Naive thymus-derived CD8-positive, alpha-beta T cell (primary cell): ENCODE measurements at regions of chr16 and their contacts with region 1.

Region 1: DNA sequence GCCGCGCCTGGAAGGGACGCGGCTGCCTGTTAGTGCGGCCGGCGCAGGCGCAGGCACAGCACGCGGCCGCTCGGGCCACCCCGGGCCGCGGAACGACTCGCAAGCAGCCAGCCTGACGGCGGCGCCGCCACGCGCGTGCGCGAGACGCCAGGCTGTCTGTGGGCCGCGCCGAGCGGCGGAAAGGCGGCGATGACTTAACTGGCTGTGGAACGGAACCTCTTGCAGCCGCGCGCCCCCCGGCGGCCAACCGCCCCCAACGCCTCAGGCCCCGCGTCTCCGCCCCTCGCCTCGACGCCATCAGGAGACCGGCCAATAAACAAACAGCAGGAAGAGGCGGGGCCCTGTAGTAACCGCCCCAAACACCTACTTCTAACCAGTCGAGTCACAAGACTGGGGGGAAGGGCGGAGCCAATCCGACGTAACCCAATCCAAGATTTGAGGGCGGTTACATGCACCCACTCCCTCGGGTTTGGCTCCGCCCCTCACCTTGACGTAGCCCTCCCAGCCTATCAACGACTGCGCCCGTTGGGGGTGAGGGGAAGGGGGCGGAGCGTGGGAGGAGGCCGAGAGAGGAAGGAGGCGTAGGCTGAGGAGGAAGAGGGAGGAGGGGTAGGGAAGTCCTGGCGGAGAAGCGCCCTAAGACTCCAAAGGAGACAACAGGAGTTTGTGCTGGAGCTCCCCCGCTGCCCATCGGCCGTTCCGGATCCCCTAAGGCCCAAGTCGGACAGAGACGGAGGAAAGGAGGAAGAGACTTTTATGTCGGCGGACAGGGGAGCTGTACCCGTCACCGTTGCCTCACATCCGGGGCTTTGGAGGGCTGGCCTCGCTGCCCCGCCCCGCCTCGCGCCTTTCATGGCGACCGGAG is at the start of gene FBRS:
- DNase-seq: peak in 9 of 10 donors; percentile 99 to 100 (median 100)
- ATAC-seq: peak; percentile 66 to 72
- H3K4me3 Mint-ChIP-seq: peak within 1 kb of the TSS; percentile 90 to 99 (median 94)
- H3K27ac Mint-ChIP-seq: peak within 1 kb of the TSS; percentile 99 to 100 (median 100)
- H3K4me1 Mint-ChIP-seq: peaks cover 20 to 46% (median 42%) of the 10 kb centered on the region in 4 donors
- H3K27me3 Mint-ChIP-seq: no peaks in the 10 kb centered on the region
- polyA plus RNA-seq, gene FBRS: 3.2 to 8.0 (median 4.4) TPM

Region 2: GRCh38 chr16:30065143-30065850 is 592.8 kb before region 1 on chr16 and contains the start of gene ALDOA:
- POLR2A ChIA-PET with region 1: interaction called, 14 read pairs
- DNase-seq: peak; percentile 89 to 96 (median 92)
- ATAC-seq: peak; percentile 81 to 87
- H3K4me3 Mint-ChIP-seq: peak within 1 kb of the TSS; percentile 98 to 100 (median 99)
- H3K27ac Mint-ChIP-seq: peak within 1 kb of the TSS; percentile 94 to 99 (median 97)
- H3K4me1 Mint-ChIP-seq: peaks cover 17 to 46% (median 43%) of the 10 kb centered on the region in 4 donors
- H3K27me3 Mint-ChIP-seq: no peaks in the 10 kb centered on the region
- polyA plus RNA-seq, gene ALDOA: 798 to 1,176 (median 994) TPM

Region 3: DNA sequence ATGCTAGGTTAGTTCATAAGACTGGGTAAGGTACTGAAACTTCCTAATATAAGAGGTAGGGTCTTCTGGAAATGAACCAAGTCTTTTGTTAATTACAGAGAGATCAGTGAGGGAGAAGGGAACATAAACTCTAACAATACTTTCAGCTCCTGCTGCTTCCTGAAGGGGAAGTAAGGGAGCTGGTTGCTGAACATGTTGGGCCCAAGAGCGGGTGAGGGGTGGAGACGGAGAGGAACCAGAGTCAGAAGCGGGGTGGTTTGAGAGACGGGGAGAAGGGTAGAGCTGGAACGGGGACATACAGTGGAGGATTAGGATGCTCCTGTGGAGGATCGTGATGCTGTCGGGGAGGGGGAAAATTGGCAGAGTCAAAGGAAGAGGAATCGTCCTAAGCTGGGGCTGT is 112.0 kb before region 1 on chr16:
- POLR2A ChIA-PET with region 1: no interaction called
- DNase-seq: no peak
- ATAC-seq: no peak
- H3K4me3 Mint-ChIP-seq: no peak overlapping the region
- H3K27ac Mint-ChIP-seq: peak overlapping the region in 5 of 10 donors; percentile 9 to 87 (median 79)
- H3K4me1 Mint-ChIP-seq: peaks cover 15 to 23% (median 16%) of the 10 kb centered on the region in 4 donors
- H3K27me3 Mint-ChIP-seq: no peaks in the 10 kb centered on the region

Region 4: DNA sequence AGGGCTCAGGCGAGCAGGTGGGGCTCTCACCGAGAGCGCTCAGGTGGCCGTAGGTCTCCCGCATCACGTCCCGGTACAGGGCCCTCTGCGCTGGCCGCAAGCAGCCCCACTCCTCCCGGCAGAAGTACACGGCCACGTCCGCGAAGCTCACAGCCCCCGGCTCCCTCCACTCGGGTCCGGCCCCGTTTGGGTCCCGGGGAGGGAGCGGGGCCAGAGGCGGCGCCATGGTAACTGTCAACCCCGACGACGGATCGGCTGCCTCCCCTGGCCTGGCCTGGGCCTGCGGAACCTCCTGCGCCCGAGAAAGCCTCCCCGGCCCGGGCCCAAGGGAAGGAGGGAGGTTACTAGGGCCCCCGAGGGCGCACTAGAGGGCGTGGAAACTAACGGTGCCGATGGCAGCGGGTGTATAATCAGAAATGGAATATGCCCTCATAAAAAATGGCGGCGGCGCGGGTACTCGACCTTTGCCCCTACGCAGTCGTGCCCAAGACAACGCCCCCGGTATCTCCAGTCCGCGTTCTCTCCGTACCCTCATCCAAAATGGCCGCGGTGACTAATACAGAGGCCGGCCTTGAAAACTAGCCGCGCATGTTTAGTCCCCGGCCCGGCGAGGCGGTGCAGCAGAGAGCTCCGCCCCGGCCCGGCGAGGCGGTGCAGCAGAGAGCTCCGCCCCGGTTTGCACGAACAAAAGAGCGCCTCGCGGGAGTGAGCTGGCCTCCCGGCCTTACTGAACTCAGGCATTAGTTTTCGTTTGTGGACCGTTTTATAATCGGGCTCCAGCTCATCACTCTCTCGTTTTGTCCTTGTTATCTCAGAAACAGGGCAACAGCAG is 99.9 kb before region 1 on chr16 and contains the start of gene ZNF764:
- POLR2A ChIA-PET with region 1: interaction called, 15 read pairs
- DNase-seq: peak; percentile 81 to 98 (median 93)
- ATAC-seq: peak; percentile 90
- H3K4me3 Mint-ChIP-seq: peak within 1 kb of the TSS; percentile 82 to 93 (median 86)
- H3K27ac Mint-ChIP-seq: peak within 1 kb of the TSS; percentile 85 to 97 (median 94)
- H3K4me1 Mint-ChIP-seq: peaks cover 13 to 53% (median 48%) of the 10 kb centered on the region in 4 donors
- H3K27me3 Mint-ChIP-seq: no peaks in the 10 kb centered on the region
- polyA plus RNA-seq, gene ZNF764: 3.6 to 6.5 (median 4.0) TPM

Region 5: GRCh38 chr16:30609926-30610839 is 47.9 kb before region 1 on chr16 and contains the start of gene ZNF689:
- POLR2A ChIA-PET with region 1: interaction called, 13 read pairs
- DNase-seq: peak; percentile 77 to 99 (median 94)
- ATAC-seq: peak; percentile 92 to 93
- H3K4me3 Mint-ChIP-seq: peak within 1 kb of the TSS; percentile 87 to 97 (median 94)
- H3K27ac Mint-ChIP-seq: peak within 1 kb of the TSS; percentile 94 to 99 (median 97)
- H3K4me1 Mint-ChIP-seq: peaks cover 5 to 30% (median 27%) of the 10 kb centered on the region in 4 donors
- H3K27me3 Mint-ChIP-seq: peaks cover 0 to 1% (median 0%) of the 10 kb centered on the region in 5 donors
- polyA plus RNA-seq, gene ZNF689: 7.7 to 12.5 (median 11.0) TPM

Region 6: GRCh38 chr16:30621765-30622164 is 36.3 kb before region 1 on chr16:
- POLR2A ChIA-PET with region 1: no interaction called
- DNase-seq: no peak
- ATAC-seq: no peak
- H3K4me3 Mint-ChIP-seq: no peak overlapping the region
- H3K27ac Mint-ChIP-seq: no peak overlapping the region
- H3K4me1 Mint-ChIP-seq: peaks cover 0 to 1% (median 0%) of the 10 kb centered on the region in 4 donors
- H3K27me3 Mint-ChIP-seq: peaks cover 0 to 1% (median 0%) of the 10 kb centered on the region in 5 donors

Region 7: GRCh38 chr16:30633526-30633917 is 24.6 kb before region 1 on chr16:
- POLR2A ChIA-PET with region 1: interaction called, 21 read pairs
- DNase-seq: no peak
- ATAC-seq: no peak
- H3K4me3 Mint-ChIP-seq: peak overlapping the region; percentile 85 to 99 (median 94)
- H3K27ac Mint-ChIP-seq: peak overlapping the region; percentile 93 to 99 (median 98)
- H3K4me1 Mint-ChIP-seq: peaks cover 14 to 25% (median 22%) of the 10 kb centered on the region in 4 donors
- H3K27me3 Mint-ChIP-seq: no peaks in the 10 kb centered on the region

Region 8: DNA sequence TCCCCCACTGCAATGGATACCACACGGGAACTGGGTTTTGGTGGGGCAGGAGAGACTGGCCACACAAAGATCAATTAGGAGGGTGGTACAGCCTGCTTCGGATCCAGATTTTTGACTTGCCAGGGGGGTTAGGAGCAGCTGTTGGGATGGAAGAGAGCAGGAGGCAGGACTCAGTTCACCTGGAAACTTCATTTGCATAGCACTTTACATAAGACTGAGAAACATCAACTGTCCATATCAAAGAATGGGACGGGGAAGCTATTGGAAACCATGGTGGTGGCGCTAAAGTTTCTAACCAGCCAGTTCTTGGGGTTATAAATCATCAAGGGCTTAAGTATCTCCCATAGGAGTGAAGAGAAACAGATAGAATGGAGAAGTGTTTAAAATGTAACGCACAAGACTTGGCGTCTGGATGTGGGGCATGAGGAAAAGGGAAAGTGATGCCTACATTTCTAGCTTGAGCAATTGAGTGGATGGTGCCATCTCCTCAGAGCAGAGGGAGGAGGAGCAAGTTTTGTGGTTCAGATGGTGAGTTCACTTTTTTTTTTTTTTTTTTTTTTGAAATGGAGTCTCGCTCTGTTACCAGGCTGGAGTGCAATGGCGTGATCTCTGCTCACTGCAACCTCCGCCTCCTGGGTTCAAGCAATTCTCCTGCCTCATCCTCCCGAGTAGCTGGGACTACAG is 34.4 kb after region 1 on chr16:
- POLR2A ChIA-PET with region 1: interaction called, 101 read pairs
- DNase-seq: no peak
- ATAC-seq: no peak
- H3K4me3 Mint-ChIP-seq: no peak overlapping the region
- H3K27ac Mint-ChIP-seq: peak overlapping the region in 5 of 10 donors; percentile 11 to 61 (median 52)
- H3K4me1 Mint-ChIP-seq: peaks cover 7 to 24% (median 19%) of the 10 kb centered on the region in 4 donors
- H3K27me3 Mint-ChIP-seq: no peaks in the 10 kb centered on the region

Region 9: GRCh38 chr16:30698139-30698815 is 40.2 kb after region 1 on chr16:
- POLR2A ChIA-PET with region 1: interaction called, 101 read pairs
- DNase-seq: peak; percentile 98 to 100 (median 100)
- ATAC-seq: peak; percentile 75 to 77
- H3K4me3 Mint-ChIP-seq: peak overlapping the region; percentile 93 to 98 (median 96)
- H3K27ac Mint-ChIP-seq: peak overlapping the region; percentile 99 to 100 (median 100)
- H3K4me1 Mint-ChIP-seq: peaks cover 14 to 43% (median 40%) of the 10 kb centered on the region in 4 donors
- H3K27me3 Mint-ChIP-seq: no peaks in the 10 kb centered on the region

Region 10: DNA sequence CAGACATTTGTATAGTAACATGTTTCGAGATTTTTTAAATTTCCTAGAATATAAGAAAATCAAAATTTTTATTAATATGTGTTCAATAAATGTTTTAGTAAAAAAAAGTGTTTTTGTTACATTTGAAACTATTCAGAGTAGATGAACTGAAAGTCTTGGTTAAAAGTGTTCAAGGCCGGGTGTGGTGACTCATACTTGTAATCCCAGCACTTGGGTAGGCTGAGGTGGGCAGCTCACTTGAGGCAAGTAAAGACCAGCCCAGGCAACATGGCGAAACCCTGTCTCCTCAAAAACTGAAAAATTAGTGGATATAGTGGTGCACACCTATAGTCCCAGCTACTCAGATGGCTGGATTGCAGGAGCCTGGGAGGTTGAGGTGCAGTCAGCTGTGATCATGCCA is 73.3 kb after region 1 on chr16:
- POLR2A ChIA-PET with region 1: no interaction called
- DNase-seq: no peak
- ATAC-seq: no peak
- H3K4me3 Mint-ChIP-seq: no peak overlapping the region
- H3K27ac Mint-ChIP-seq: peak overlapping the region in 2 of 10 donors; percentile 15 to 19
- H3K4me1 Mint-ChIP-seq: peaks cover 0 to 6% (median 2%) of the 10 kb centered on the region in 4 donors
- H3K27me3 Mint-ChIP-seq: no peaks in the 10 kb centered on the region